ENCODE measurements at regions of chr22 and their contacts with region 1.

Region 1: GRCh38 chr22:40161194-40161593 is 16.5 kb upstream of the TNRC6B start:
- DNase-seq: no peak
- ATAC-seq: no peak
- H3K4me3 ChIP-seq: no peak overlapping the region
- H3K27ac ChIP-seq: no peak overlapping the region
- H3K4me1 ChIP-seq: peaks cover 0 to 7% (median 0%) of the 10 kb centered on the region in 12 donors
- H3K27me3 ChIP-seq: no peaks in the 10 kb centered on the region
- CTCF ChIP-seq: no peak
- POLR2A ChIP-seq: no peak

Region 2: DNA sequence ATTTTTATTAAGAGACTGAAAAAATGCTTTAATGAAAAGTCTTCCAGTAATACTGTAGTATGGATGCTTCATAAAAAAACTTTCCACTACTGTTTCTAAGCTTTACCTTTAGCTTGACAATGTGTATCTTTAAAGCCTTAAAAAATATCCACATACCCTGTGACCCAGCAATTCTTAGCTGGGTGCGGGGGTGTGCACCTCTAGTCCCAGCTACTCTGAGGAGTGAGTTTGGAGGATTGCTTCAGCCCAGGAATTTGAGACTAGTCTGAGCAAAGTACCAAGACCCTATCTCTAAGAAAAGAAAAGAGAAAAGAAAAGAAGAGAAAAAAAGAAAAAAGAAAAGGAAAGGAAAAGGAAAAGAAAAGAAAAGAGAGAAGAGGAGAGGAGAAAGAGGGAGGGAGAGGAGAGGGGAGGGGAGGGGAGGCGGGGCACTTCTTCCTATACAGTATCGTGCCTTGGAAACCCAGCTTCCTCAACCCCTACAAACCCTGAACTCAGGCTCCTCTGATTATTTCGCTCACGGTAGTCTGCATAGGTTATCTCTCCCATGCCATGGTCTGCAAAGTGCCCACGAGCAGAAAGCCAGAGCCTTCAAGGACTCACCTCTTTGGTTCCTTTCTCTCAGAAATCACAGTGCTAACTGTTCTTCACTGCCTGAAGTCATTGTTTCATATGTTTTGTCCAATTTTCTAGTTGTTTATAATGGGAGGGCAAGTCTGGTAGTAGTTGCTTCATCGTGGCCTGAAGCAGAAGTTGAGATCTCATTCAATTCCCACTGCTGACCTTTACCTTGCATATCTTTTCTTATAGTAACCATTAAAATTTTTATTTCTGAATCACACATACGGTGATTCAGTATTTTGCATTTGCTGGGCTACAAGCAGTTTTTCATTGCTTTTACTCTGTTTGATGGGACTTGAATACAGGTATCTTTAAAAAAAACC is 84.2 kb before region 1 on chr22:
- intact Hi-C with region 1: loop called in 1 of 10 experiments (anchors 10 kb)
- DNase-seq: no peak
- ATAC-seq: peak in 1 of 4 donors; percentile 20
- H3K4me3 ChIP-seq: no peak overlapping the region
- H3K27ac ChIP-seq: no peak overlapping the region
- H3K4me1 ChIP-seq: peaks cover 0 to 37% (median 12%) of the 10 kb centered on the region in 12 donors
- H3K27me3 ChIP-seq: no peaks in the 10 kb centered on the region
- CTCF ChIP-seq: no peak
- POLR2A ChIP-seq: no peak

Measured in heart left ventricle (tissue), 16 donors.